Activated T-helper 1 cell treated with anti-CD3 and anti-CD28 coated beads, Interleukin-12 subunit alpha, Interleukin-12 subunit beta, Interleukin-2, Interleukin-4 antibody, amounts not matched to agents 30 ng/mL and 10 ng/mL and 1 ng/mL, durations not matched to agents 14 hours and 24 hours and 36 hours (primary cell): ENCODE measurements at regions of chr16 and their contacts with region 1.

Region 1: DNA sequence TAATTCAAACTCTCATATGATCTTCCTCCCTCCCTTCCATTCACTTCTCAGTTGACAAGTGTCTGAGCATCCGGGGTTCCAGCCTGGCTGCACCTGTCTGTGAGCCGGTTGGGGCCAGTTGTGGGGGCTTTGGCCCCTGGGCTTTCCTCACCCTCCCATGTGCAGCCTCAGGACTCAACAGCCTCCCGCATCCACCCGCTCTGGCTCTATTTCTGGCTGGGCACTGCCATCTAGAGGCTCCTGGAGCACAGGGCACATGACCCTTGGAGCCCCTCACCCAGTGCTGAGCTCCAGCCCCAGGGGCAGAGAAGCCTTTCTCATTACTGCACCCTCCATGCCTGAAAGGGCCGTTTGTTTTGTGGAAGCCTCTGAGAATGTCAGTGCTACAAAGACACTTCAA is 43.3 kb downstream of the HAPSTR1 start:
- DNase-seq: peak; percentile 40
- H3K4me3 Mint-ChIP-seq: no peak overlapping the region
- H3K27ac Mint-ChIP-seq: peak overlapping the region; percentile 69
- H3K4me1 Mint-ChIP-seq: peaks cover 22% of the 10 kb centered on the region
- H3K27me3 Mint-ChIP-seq: peaks cover 6% of the 10 kb centered on the region

Region 2: GRCh38 chr16:8905168-8905762 is 229.5 kb before region 1 on chr16:
- intact Hi-C with region 1: loop called (anchors 2 kb)
- DNase-seq: no peak
- H3K4me3 Mint-ChIP-seq: no peak overlapping the region
- H3K27ac Mint-ChIP-seq: no peak overlapping the region
- H3K4me1 Mint-ChIP-seq: peaks cover 24% of the 10 kb centered on the region
- H3K27me3 Mint-ChIP-seq: no peaks in the 10 kb centered on the region

Region 3: GRCh38 chr16:9008601-9009260 is 126.0 kb before region 1 on chr16:
- intact Hi-C with region 1: loop called (anchors 1 kb)
- DNase-seq: peak; percentile 42
- H3K4me3 Mint-ChIP-seq: no peak overlapping the region
- H3K27ac Mint-ChIP-seq: no peak overlapping the region
- H3K4me1 Mint-ChIP-seq: no peaks in the 10 kb centered on the region
- H3K27me3 Mint-ChIP-seq: peaks cover 8% of the 10 kb centered on the region

Region 4: DNA sequence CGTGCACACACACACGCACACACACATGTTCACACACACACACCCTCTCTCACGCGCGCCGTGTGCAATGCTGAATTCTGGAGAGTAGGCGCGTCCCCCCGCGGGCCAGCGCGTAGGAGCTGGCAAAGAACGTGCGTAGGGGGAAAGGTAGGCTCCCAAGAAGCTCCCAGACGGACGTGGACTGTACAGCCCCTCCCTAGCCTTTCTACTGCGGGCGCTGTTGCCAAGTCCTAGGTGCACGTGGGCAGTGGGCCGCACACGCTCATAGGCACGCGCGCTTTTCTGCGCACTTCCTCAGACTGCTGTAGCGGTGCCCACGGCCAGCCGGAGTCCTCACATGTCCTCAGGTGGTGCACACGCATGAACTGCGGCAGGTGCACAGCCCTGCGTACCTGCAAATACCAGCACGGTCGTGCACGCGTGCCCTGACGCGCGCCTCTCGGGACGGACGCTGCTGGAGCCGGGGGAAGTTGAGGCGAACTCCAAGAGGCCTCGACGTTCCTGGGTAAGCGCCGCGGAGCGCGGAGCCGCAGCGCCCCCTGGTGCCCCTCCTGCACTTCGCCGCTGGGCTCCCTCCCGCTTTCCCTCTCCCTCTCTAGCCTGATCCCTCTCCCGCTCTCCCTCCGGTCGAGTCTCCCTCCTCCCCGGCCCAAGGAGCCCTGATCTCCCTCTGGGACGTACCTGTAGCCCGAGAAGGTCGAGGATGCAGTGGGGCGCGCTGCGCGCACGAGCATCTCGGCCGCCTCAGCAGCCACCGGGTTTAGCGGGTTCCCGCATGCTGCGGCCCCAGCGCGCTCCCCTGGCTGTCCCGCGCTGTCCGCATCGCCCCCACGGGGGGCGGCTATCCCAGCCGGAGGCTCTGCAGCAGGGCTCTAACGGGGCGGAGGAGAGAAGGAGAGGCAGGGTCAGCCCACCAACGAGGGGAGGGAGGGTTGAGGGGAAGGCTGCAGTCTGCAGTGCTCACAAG is 1046.7 kb after region 1 on chr16:
- intact Hi-C with region 1: loop called (anchors 2 kb)
- DNase-seq: peak; percentile 19
- H3K4me3 Mint-ChIP-seq: no peak overlapping the region
- H3K27ac Mint-ChIP-seq: no peak overlapping the region
- H3K4me1 Mint-ChIP-seq: no peaks in the 10 kb centered on the region
- H3K27me3 Mint-ChIP-seq: peaks cover 37% of the 10 kb centered on the region